ENCODE measurements at regions of chrX and their contacts with region 1.

Region 1: GRCh38 chrX:150693775-150694574 is 779 bp downstream of the MTMR1 start:
- DNase-seq: peak; percentile 80
- H3K4me3 ChIP-seq: peak overlapping the region; percentile 43 to 61 (median 54)
- H3K27ac ChIP-seq: peak overlapping the region; percentile 79 to 90 (median 86)
- H3K4me1 ChIP-seq: peaks cover 0 to 11% (median 3%) of the 10 kb centered on the region in 4 donors
- H3K27me3 ChIP-seq: no peaks in the 10 kb centered on the region
- CTCF ChIP-seq: no peak
- EP300 ChIP-seq: no peak
- POLR2A ChIP-seq: no peak

Region 2: GRCh38 chrX:149950681-149951080 is 743.3 kb before region 1 on chrX:
- in situ Hi-C with region 1: loop called in 1 of 4 experiments (anchors 25 kb)
- intact Hi-C with region 1: loop called (anchors 10 kb)
- DNase-seq: no peak
- H3K4me3 ChIP-seq: no peak overlapping the region
- H3K27ac ChIP-seq: peak overlapping the region; percentile 35 to 40 (median 38)
- H3K4me1 ChIP-seq: peaks cover 0 to 3% (median 0%) of the 10 kb centered on the region in 4 donors
- H3K27me3 ChIP-seq: no peaks in the 10 kb centered on the region
- CTCF ChIP-seq: peak; percentile 20 to 42 (median 30)
- EP300 ChIP-seq: no peak
- POLR2A ChIP-seq: no peak

Measured in transverse colon (tissue), 4 donors.